H1 (cell line): ENCODE measurements at regions of chr9 and their contacts with region 1.

Region 1: DNA sequence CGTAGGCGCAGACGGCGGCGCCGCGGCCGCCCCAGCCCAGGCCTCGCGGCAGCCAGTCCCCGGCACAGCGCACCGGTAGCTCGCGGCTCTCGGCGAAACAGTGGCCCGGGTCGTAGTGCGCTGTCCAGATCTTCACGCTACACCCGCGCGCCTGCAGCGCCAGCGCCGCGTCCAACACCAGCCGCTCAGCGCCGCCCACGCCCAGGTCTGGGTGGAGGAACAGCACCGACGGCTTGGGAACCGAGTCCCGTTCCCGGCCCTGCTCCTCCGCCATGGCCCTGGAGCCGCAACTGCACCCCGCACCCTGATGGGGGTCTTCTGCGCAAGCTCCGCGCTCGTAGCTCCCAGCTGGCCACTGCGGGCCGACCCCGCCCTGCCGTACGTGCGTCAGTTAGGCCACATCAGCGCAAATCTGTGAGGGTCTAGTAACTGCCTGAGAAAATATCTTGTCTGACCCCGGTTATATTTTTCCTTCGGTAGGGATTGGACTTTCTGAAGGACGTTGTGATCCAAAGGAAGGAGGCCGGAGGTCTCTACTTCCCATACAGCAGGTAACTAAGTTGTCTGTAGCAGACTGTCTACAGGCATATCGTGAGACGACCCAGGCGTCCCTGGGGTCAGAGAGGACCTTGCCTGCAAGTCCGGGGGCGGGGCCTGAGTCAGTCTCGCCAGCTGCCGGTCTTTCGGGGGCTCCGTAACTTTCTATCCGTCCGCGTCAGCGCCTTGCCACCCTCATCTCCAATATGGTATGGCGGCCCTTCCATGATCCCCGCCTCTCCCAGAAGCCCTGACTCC is at the starts of genes ALG2 and SEC61B:
- DNase-seq: peak; percentile 87 to 95
- H3K4me3 ChIP-seq: peak within 1 kb of the TSS; percentile 73 to 98 (median 92)
- H3K27ac ChIP-seq: peak within 1 kb of the TSS; percentile 99
- H3K4me1 ChIP-seq: peaks cover 0 to 3% (median 2%) of the 10 kb centered on the region in 4 experiments; a peak in 4 of 7 replicates
- H3K27me3 ChIP-seq: no peaks in the 10 kb centered on the region
- CTCF ChIP-seq: no peak
- EP300 ChIP-seq: no peak
- POLR2A ChIP-seq: peak; percentile 93 to 99
- RAD21 ChIP-seq: no peak
- total RNA-seq, gene ALG2: 27.8 and 30.7 TPM in 2 replicates
- total RNA-seq, gene SEC61B: 155 and 163 TPM in 2 replicates

Region 2: GRCh38 chr9:99162759-99163364 is 59.0 kb before region 1 on chr9:
- CTCF ChIA-PET with region 1: interaction called, 11 read pairs
- POLR2A ChIA-PET with region 1: no interaction called
- DNase-seq: no peak
- H3K4me3 ChIP-seq: no peak overlapping the region
- H3K27ac ChIP-seq: no peak overlapping the region
- H3K4me1 ChIP-seq: peaks cover 0 to 5% (median 4%) of the 10 kb centered on the region in 4 experiments; a peak in 4 of 7 replicates
- H3K27me3 ChIP-seq: no peaks in the 10 kb centered on the region
- CTCF ChIP-seq: peak in 2 of 3 experiments; percentile 47 to 55; a peak in 2 of 4 replicates
- EP300 ChIP-seq: no peak
- POLR2A ChIP-seq: no peak
- RAD21 ChIP-seq: peak; percentile 82

Region 3: GRCh38 chr9:99211741-99212140 is 10.1 kb before region 1 on chr9:
- CTCF ChIA-PET with region 1: interaction called, 5 read pairs
- POLR2A ChIA-PET with region 1: interaction called, 26 read pairs
- DNase-seq: no peak
- H3K4me3 ChIP-seq: no peak overlapping the region
- H3K27ac ChIP-seq: no peak overlapping the region
- H3K4me1 ChIP-seq: no peaks in the 10 kb centered on the region
- H3K27me3 ChIP-seq: no peaks in the 10 kb centered on the region
- CTCF ChIP-seq: peak; percentile 38 to 58 (median 48)
- EP300 ChIP-seq: no peak
- POLR2A ChIP-seq: no peak
- RAD21 ChIP-seq: peak in 1 of 2 experiments; percentile 28; a peak in 3 of 4 replicates